ENCODE measurements at regions of chr3 and their contacts with region 1.

Region 1: GRCh38 chr3:12663936-12664908 is at the start of gene RAF1:
- DNase-seq: peak; percentile 98
- ATAC-seq: peak; percentile 92
- H3K4me3 ChIP-seq: peak within 1 kb of the TSS; percentile 76
- H3K27ac ChIP-seq: peak within 1 kb of the TSS; percentile 95
- H3K4me1 ChIP-seq: peaks cover 9% of the 10 kb centered on the region
- H3K27me3 ChIP-seq: no peaks in the 10 kb centered on the region
- CTCF ChIP-seq: no peak
- POLR2A ChIP-seq: peak; percentile 88
- RAD21 ChIP-seq: 0 out of 2 replicates have a peak, but pooled peaks have one; percentile 11
- total RNA-seq, gene RAF1: 128 and 151 TPM in 2 replicates

Region 2: GRCh38 chr3:12556671-12557472 is 107.3 kb before region 1 on chr3 and contains the start of gene MKRN2:
- CTCF ChIA-PET with region 1: no interaction called
- POLR2A ChIA-PET with region 1: no interaction called
- dilution Hi-C with region 1: no loop called
- in situ Hi-C with region 1: no loop called
- intact Hi-C with region 1: no loop called
- DNase-seq: peak; percentile 78
- ATAC-seq: peak; percentile 93
- H3K4me3 ChIP-seq: peak within 1 kb of the TSS; percentile 85
- H3K27ac ChIP-seq: peak within 1 kb of the TSS; percentile 91
- H3K4me1 ChIP-seq: peaks cover 5% of the 10 kb centered on the region
- H3K27me3 ChIP-seq: no peaks in the 10 kb centered on the region
- CTCF ChIP-seq: no peak
- POLR2A ChIP-seq: peak; percentile 93
- RAD21 ChIP-seq: no peak; the same call in 1 of the 2 replicates
- total RNA-seq, gene MKRN2: 65.6 and 65.8 TPM in 2 replicates

Region 3: GRCh38 chr3:12601072-12601471 is 63.1 kb before region 1 on chr3:
- CTCF ChIA-PET with region 1: no interaction called
- POLR2A ChIA-PET with region 1: interaction called, 6 read pairs
- dilution Hi-C with region 1: no loop called
- in situ Hi-C with region 1: no loop called
- intact Hi-C with region 1: loop called (anchors 5 kb)
- DNase-seq: no peak
- ATAC-seq: no peak
- H3K4me3 ChIP-seq: no peak overlapping the region
- H3K27ac ChIP-seq: no peak overlapping the region
- H3K4me1 ChIP-seq: no peaks in the 10 kb centered on the region
- H3K27me3 ChIP-seq: no peaks in the 10 kb centered on the region
- CTCF ChIP-seq: 0 out of 2 replicates have a peak, but pooled peaks have one; percentile 4
- POLR2A ChIP-seq: no peak
- RAD21 ChIP-seq: peak; percentile 6; the same call in 1 of the 2 replicates

Region 4: DNA sequence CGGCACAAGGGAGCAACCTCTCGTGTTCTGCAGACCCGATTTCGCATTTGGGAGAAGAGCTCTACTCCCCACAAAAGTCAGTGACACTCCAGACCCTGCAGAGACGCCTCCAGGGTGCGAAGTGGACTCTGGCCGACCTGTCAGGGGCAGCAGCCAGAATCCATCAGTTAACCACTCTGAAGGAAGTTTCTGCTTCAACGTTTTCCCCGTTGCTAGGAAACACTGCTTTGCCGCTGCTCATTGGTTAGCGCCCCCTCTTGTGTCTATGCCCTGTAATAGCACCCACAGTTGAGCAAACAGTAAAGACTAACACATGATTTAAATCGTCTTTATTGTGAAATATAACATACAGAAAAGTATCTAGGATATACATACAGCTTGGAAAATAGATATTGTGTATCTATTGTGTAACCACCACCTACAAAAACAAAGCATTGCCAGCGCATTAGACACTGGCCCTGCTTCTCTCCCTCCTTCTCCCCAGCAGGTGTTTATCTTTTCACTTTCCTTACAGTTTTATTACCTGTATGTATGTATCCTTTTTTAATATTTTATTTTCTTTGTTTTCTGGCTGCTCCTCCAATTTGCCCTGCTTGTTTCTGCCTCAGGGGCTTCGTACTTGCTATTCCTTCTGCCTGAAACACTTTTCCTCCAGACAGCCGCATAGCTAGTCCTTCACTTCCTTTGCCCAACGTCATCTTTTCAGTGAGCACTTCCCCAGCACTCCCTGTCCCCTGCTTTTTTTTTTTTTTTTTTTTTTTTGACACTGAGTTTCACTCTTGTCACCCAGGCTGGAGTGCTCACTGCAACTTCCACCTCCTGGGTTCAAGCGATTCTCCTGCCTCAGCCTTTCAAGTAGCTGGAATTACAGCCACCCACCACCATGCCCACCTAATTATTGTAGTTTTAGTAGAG is 56.0 kb after region 1 on chr3:
- CTCF ChIA-PET with region 1: no interaction called
- POLR2A ChIA-PET with region 1: no interaction called
- dilution Hi-C with region 1: no loop called
- in situ Hi-C with region 1: no loop called
- intact Hi-C with region 1: no loop called
- DNase-seq: peak; percentile 82
- ATAC-seq: peak; percentile 98
- H3K4me3 ChIP-seq: peak overlapping the region; percentile 28
- H3K27ac ChIP-seq: no peak overlapping the region
- H3K4me1 ChIP-seq: no peaks in the 10 kb centered on the region
- H3K27me3 ChIP-seq: no peaks in the 10 kb centered on the region
- CTCF ChIP-seq: peak; percentile 96
- POLR2A ChIP-seq: no peak
- RAD21 ChIP-seq: peak; percentile 84

Region 5: DNA sequence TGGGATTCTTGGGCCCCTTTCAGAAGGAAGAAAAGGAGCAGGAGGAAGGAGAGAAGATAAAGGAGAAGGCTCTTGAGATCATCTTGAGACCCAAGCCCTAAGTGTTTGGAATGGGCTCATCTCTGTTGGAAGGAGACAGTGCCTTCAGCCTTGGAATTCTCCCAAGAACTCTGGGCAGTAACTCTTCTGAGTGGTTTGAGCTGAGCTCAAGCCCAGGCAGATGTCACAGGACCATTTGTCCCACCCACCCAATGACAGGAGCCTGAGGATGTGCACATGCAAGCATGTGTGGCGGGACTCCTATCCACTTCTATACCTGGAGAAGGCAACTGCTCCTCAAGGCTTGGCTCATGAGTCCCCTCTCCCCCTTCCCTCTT is 109.5 kb after region 1 on chr3:
- CTCF ChIA-PET with region 1: no interaction called
- POLR2A ChIA-PET with region 1: no interaction called
- dilution Hi-C with region 1: no loop called
- in situ Hi-C with region 1: no loop called
- intact Hi-C with region 1: no loop called
- DNase-seq: no peak
- ATAC-seq: peak; percentile 21; the same call in 1 of the 2 replicates
- H3K4me3 ChIP-seq: no peak overlapping the region
- H3K27ac ChIP-seq: no peak overlapping the region
- H3K4me1 ChIP-seq: no peaks in the 10 kb centered on the region
- H3K27me3 ChIP-seq: peaks cover 10% of the 10 kb centered on the region
- CTCF ChIP-seq: no peak
- POLR2A ChIP-seq: no peak
- RAD21 ChIP-seq: no peak

Region 6: GRCh38 chr3:13141991-13142412 is 477.8 kb after region 1 on chr3:
- CTCF ChIA-PET with region 1: no interaction called
- POLR2A ChIA-PET with region 1: no interaction called
- dilution Hi-C with region 1: no loop called
- in situ Hi-C with region 1: no loop called
- intact Hi-C with region 1: no loop called
- DNase-seq: peak; percentile 28
- ATAC-seq: peak; percentile 81
- H3K4me3 ChIP-seq: no peak overlapping the region
- H3K27ac ChIP-seq: no peak overlapping the region
- H3K4me1 ChIP-seq: no peaks in the 10 kb centered on the region
- H3K27me3 ChIP-seq: no peaks in the 10 kb centered on the region; the same call in 1 of the 2 replicates
- CTCF ChIP-seq: no peak
- POLR2A ChIP-seq: no peak
- RAD21 ChIP-seq: no peak